HEK293 (cell line): ENCODE measurements at regions of chr2 and their contacts with region 1.

Region 1: DNA sequence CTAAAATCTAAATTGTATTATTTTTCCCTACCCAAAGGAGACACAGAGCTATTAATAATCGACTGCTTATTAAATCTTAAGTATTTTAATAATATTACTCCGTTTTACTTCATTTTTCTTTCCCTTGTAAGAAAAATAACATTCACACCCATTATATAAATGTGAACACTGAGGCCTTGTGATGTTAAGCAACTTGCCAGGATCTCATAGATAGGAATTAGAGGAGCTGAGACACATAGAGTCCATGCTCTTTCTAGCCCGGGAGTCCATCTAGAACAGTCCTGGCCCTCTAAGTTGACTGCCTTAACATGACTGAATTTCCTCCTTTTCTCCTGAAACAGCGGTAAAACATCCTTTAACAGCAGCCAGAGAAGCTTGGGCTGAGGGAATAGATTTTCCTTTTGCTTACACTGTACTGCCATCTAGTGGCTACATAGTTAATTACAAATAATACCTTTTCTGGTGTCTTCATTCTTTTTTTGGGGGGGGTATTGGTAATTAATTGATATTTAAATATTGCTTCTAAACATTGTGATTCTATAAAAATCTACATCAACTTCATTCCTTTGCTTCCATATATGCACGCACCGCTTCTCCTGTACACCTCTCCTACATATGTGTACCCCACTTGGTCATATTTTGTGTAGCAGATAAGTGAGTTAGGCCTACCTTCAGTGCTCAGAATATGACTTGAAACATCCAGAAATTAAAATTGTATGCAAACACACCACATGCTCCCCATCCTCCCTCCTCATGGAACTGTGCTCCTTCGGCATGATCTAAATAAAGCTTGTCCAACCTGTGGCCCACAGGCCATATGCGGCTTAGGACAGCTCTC is 125.8 kb upstream of the HNMT start:
- H3K4me3 ChIP-seq: no peak overlapping the region
- H3K27ac ChIP-seq: no peak overlapping the region
- H3K4me1 ChIP-seq: no peaks in the 10 kb centered on the region
- CTCF ChIP-seq: peak; percentile 43; the same call in 1 of the 2 replicates

Region 2: DNA sequence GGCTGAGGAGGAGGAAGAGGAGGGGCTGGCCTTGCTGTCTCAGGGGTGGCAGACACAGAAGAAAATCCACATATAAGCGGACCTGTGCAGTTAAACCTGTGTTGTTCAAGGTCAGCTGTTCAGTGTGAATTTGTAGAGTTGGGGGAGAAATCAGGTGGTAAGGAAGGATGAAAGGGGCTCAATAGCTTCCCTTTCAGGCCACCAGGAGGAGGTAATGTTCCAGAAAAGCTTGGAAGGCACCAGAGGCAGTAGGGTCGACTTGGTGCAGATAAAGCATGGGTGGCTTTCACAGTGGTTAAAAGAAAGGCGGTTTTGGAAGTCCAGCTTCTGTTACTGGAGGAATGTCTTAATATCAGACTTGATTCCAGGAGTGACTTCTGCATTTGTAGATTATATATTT is 905.8 kb before region 1 on chr2:
- CTCF ChIA-PET with region 1: interaction called, 10 read pairs
- POLR2A ChIA-PET with region 1: no interaction called
- H3K4me3 ChIP-seq: no peak overlapping the region
- H3K27ac ChIP-seq: no peak overlapping the region
- H3K4me1 ChIP-seq: no peaks in the 10 kb centered on the region
- CTCF ChIP-seq: no peak

Region 3: GRCh38 chr2:137467246-137467862 is 371.1 kb before region 1 on chr2:
- CTCF ChIA-PET with region 1: interaction called, 17 read pairs
- POLR2A ChIA-PET with region 1: no interaction called
- H3K4me3 ChIP-seq: no peak overlapping the region
- H3K27ac ChIP-seq: no peak overlapping the region
- H3K4me1 ChIP-seq: no peaks in the 10 kb centered on the region
- CTCF ChIP-seq: no peak

Region 4: DNA sequence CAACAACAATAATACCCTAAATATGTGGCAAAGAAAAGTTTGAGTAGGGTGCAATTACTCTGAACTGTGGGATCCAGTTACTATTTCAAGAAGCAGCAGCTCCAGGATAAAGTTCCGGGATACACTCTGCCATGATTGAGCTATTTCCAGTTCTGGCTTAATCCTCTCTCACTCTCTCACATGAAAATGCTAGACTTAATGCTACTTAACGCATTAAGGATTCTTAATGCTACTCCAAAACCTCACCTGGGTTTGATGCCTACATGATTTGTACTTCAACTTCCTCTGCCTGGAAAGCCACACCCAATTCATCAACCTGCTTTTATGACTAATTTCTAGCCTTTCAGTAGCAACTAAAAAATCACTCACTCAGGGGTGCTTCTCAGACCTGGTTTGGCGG is 25.3 kb before region 1 on chr2:
- CTCF ChIA-PET with region 1: no interaction called
- POLR2A ChIA-PET with region 1: no interaction called
- H3K4me3 ChIP-seq: no peak overlapping the region
- H3K27ac ChIP-seq: no peak overlapping the region
- H3K4me1 ChIP-seq: no peaks in the 10 kb centered on the region
- CTCF ChIP-seq: no peak